Ovary (tissue), 10 donors: ENCODE measurements at regions of chr15 and their contacts with region 1.

Region 1: DNA sequence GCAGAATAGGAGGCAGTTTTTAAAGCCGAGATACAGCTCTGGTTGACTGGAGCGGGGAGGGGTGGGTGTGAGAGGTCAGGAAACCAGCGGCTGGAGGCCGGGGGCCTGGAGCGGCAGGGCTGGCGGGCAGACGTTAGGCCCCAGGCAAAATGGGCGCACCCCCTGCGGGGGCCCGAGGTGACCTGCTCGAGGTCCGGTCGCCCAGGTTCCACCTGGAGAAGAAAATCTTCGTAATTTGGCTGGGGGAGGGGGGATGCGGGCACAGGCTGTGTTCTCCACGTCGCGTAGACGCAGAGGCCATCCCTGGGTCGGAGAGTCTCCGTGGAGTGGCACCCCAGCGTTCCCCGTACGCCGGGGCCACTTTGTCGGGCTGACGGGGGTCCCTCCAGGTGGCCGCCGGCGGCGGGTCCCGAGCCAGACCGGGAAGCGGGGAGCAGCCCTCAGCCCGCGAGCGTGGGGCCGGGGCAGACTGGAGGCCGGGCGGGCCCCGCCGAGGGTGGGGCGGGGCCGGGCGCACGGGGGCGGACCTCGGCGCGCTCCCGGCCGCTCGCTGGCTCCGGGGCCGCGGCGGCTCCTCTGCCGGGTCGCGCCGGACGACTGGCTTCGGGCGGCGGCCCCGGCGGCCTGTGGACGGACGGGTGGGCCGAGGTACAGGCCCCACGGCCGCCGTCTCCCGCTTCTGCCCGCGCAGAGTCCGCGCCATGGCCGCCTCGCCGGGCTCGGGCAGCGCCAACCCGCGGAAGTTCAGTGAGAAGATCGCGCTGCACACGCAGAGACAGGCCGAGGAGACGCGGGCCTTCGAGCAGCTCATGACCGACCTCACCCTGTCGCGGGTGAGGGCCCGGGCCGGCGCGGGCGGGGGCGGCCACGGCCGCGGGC is at the start of gene CRTC3:
- DNase-seq: peak; percentile 56 to 76 (median 68)
- H3K4me3 ChIP-seq: peak within 1 kb of the TSS; percentile 89
- H3K27ac ChIP-seq: peak within 1 kb of the TSS; percentile 97 to 99
- H3K4me1 ChIP-seq: peaks cover 17% of the 10 kb centered on the region
- H3K27me3 ChIP-seq: no peaks in the 10 kb centered on the region
- CTCF ChIP-seq: no peak
- EP300 ChIP-seq: no peak
- POLR2A ChIP-seq: peak; percentile 62
- total RNA-seq, gene CRTC3: 36.9 to 106 (median 85.4) TPM

Region 2: DNA sequence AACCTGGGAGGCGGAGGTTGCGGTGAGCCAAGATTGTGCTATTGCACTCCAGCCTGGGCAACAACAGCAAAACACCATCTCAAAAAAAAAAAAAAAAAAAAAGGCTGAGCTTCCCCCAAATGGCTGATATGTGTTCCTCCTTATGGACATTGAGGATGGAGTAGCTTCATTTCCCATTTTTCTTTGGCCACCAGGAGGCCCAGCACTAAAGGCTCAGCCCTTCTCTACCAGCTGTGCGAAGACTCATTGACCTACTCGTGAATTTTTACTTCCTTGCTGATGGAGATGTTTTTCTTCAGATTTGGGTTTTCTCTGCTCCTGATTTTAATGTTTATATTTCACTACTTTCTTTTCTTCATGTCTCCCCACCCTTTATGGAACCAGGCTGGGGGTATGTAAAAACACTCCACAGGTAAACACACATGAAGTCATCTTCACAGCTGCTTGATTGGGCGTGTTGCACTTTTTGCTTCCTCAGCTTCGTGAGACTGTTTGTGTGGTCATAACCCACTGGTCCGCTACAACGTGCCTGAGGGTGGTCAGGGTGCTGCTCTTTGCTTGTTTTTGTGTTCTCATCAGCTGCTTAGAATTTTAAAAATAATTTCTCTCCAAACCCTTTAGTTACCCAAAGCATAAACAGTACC is 314.9 kb before region 1 on chr15:
- intact Hi-C with region 1: no loop called
- DNase-seq: no peak
- H3K4me3 ChIP-seq: no peak overlapping the region
- H3K27ac ChIP-seq: no peak overlapping the region
- H3K4me1 ChIP-seq: no peaks in the 10 kb centered on the region
- H3K27me3 ChIP-seq: no peaks in the 10 kb centered on the region
- CTCF ChIP-seq: no peak
- EP300 ChIP-seq: no peak
- POLR2A ChIP-seq: no peak

Region 3: DNA sequence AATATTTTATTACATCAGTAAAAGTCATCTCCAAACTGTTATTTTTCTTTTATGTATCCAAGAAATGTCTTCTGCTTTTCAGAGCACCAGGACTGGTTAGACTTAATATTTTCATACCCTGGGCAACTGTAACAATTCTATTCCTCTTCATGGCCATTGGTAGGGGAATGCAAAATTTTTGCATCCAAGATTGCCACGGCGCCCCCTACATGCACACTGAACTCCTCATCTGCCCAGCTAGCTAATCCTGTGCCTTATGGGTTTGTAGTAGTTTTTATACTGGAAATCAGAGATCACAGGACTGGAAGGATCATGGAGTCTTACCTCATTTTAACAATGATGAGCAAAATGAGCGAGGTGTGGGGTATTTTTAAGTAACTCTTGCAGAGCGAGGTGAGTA is 74.3 kb after region 1 on chr15:
- intact Hi-C with region 1: loop called in 2 of 4 experiments (anchors 10 kb)
- DNase-seq: no peak
- H3K4me3 ChIP-seq: no peak overlapping the region
- H3K27ac ChIP-seq: no peak overlapping the region
- H3K4me1 ChIP-seq: peaks cover 6% of the 10 kb centered on the region
- H3K27me3 ChIP-seq: no peaks in the 10 kb centered on the region
- CTCF ChIP-seq: no peak
- EP300 ChIP-seq: no peak
- POLR2A ChIP-seq: no peak

Region 4: DNA sequence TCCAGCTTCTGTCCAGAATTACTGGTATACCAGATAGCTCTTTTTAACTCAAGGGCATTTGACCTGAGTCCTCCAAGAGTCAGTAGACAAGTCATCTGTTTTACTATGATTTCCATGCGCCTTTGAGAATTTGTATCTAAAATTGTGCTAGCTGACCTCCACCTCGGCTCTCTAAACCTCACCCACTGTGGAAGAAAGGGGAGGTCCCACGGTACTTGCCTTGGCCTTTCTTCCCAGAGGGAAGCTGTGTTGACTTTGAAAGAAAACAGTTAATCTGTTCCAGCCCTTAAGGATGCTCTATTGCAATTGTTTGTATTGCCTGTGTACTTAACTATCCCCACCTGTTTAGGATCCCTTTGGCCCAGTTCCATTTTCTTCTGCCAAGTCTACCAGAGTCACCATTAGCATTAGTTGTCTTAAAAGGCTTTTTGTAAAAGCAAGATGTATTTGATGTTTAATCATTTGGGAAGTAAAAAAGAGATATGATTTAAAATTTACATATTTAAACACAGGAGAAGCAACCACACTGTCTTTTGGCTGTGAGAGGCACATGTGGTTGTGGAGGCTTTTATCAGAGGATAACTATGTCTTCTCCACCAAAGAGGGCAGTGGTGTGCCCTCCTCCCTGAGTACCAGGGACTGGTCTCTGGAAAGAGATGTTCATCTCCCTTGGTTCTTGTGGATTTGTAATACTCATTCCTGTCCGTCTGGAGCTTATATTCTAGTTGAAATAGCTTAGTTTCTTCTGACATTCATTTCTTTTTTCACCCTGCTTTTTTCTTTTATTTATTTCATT is 88.9 kb after region 1 on chr15:
- intact Hi-C with region 1: loop called in 1 of 4 experiments (anchors 10 kb)
- DNase-seq: no peak
- H3K4me3 ChIP-seq: no peak overlapping the region
- H3K27ac ChIP-seq: no peak overlapping the region
- H3K4me1 ChIP-seq: peaks cover 5% of the 10 kb centered on the region
- H3K27me3 ChIP-seq: no peaks in the 10 kb centered on the region
- CTCF ChIP-seq: no peak
- EP300 ChIP-seq: no peak
- POLR2A ChIP-seq: no peak